ENCODE measurements at regions of chr10 and their contacts with region 1.

Region 1: DNA sequence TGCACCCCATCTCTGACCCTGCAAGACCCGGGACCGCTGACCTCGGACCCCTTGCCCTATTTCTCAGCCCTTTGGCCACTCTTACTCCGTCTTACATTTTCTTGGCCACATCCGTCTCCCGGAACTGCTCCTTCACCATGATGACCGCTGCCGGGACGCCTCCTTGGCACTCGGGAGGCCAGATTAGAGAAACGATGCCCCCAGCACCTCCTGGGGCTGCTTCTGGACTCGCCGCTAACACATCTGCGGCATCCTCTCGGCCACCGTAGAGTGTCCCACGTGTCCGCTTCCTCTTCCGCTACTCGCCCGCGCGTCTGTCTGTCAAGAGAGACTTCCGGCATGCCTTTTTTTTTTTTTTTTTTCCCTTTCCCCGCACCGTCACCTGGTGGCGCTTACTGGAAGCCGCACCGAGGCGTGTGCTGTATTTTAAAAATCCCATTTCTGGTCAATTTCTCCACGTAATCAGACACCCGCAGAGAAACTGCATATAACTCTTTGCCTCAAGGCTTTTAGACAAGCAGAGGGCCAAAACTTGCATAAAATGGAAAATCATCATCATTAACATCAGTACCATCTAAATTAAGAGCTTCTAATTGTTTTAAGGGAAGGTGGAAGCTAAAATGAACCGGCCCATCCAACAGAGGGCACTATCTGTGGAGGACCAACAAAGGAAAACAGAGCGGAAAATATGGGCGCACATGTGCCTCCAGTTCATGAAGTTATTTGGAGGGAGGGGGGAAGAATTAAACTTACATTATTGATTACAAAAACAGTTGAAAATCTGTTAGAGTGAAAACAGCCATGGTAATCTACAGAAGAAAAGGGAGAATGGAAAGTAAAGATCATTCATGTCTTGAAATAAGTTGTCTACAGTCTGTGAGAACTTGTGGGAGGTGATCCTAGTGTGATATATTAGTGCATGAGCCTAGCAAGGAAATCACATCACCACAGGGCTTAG is at the start of gene POLR3A:
- DNase-seq: peak; percentile 89 to 91
- H3K4me3 ChIP-seq: peak within 1 kb of the TSS; percentile 75 to 89 (median 82)
- H3K27ac ChIP-seq: peak within 1 kb of the TSS; percentile 55; the same call in 1 of the 2 replicates
- H3K4me1 ChIP-seq: no peaks in the 10 kb centered on the region; a peak in 1 of 7 replicates
- H3K27me3 ChIP-seq: no peaks in the 10 kb centered on the region; a peak in 2 of 7 replicates
- CTCF ChIP-seq: peak; percentile 42 to 66 (median 46)
- EP300 ChIP-seq: peak in 1 of 2 experiments; percentile 42; a peak in 1 of 3 replicates
- POLR2A ChIP-seq: no peak; a peak in 1 of 3 replicates
- RAD21 ChIP-seq: peak in 1 of 2 experiments; percentile 7; a peak in 1 of 4 replicates
- total RNA-seq, gene POLR3A: 35.8 and 38.6 TPM in 2 replicates

Region 2: GRCh38 chr10:78002541-78003288 is 26.8 kb before region 1 on chr10:
- CTCF ChIA-PET with region 1: interaction called, 10 read pairs
- POLR2A ChIA-PET with region 1: no interaction called
- DNase-seq: no peak
- H3K4me3 ChIP-seq: no peak overlapping the region
- H3K27ac ChIP-seq: no peak overlapping the region
- H3K4me1 ChIP-seq: no peaks in the 10 kb centered on the region
- H3K27me3 ChIP-seq: no peaks in the 10 kb centered on the region
- CTCF ChIP-seq: no peak
- EP300 ChIP-seq: no peak
- POLR2A ChIP-seq: no peak
- RAD21 ChIP-seq: no peak

Region 3: GRCh38 chr10:78042058-78042751 is 12.7 kb after region 1 on chr10:
- CTCF ChIA-PET with region 1: interaction called, 8 read pairs
- POLR2A ChIA-PET with region 1: interaction called, 41 read pairs
- DNase-seq: no peak
- H3K4me3 ChIP-seq: no peak overlapping the region
- H3K27ac ChIP-seq: no peak overlapping the region
- H3K4me1 ChIP-seq: peaks cover 2 to 28% (median 20%) of the 10 kb centered on the region in 4 experiments
- H3K27me3 ChIP-seq: no peaks in the 10 kb centered on the region; a peak in 1 of 7 replicates
- CTCF ChIP-seq: no peak
- EP300 ChIP-seq: no peak
- POLR2A ChIP-seq: peak in 1 of 2 experiments; percentile 75; a peak in 2 of 3 replicates
- RAD21 ChIP-seq: no peak